ENCODE measurements at regions of chr2 and their contacts with region 1.

Region 1: GRCh38 chr2:68472796-68473414 is 5.5 kb downstream of the APLF start:
- DNase-seq: no peak
- H3K4me3 Mint-ChIP-seq: no peak overlapping the region
- H3K27ac Mint-ChIP-seq: no peak overlapping the region
- H3K4me1 Mint-ChIP-seq: peaks cover 27% of the 10 kb centered on the region
- H3K27me3 Mint-ChIP-seq: peaks cover 1% of the 10 kb centered on the region

Region 2: DNA sequence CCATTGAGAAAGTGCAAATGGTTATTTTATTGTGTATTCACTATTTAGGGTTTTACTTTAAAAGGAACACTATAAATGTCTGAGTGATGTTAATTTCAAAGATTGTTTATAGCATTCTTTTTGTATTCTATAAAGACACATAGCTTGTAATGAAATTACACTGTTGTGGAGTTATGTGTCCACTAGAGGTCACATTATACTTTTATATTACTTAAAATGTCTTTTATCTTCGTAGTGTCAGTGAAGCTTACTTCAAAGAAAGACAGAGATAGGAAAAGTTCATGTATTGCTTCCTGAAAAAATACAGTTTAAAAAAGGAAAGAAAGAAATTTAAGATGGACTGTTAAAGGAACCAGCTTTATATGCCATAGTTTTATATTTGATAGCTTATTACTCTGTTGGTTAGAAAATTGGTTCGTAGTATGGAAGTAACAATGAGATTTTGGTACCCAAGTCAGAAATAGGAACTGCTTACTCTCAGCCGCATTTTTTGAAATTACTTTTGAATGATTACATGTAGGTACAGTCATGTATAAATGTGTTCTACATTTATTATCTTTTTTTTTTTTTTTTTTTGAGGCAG is 15.0 kb after region 1 on chr2:
- intact Hi-C with region 1: loop called (anchors 2 kb)
- DNase-seq: no peak
- H3K4me3 Mint-ChIP-seq: no peak overlapping the region
- H3K27ac Mint-ChIP-seq: no peak overlapping the region
- H3K4me1 Mint-ChIP-seq: peaks cover 6% of the 10 kb centered on the region
- H3K27me3 Mint-ChIP-seq: peaks cover 4% of the 10 kb centered on the region

Region 3: DNA sequence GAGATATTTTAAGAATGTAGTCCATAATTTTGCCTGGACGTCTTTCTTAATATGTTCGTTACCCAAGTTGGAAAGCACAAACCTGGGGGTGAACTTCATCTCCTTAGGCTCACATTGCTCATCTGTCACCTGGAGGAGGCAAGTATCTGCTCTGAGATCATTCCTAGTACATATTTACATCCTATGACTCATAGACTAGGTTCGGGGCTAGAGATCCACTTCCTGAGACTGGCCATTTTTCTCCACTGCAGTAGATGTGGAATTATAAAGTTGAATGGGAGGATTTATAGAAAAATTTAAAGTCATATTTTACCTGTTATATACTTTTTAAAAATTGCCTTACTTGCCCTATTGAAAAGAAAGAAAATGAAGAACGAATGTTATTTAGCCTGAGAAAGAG is 93.0 kb after region 1 on chr2:
- intact Hi-C with region 1: no loop called
- DNase-seq: no peak
- H3K4me3 Mint-ChIP-seq: no peak overlapping the region
- H3K27ac Mint-ChIP-seq: no peak overlapping the region
- H3K4me1 Mint-ChIP-seq: no peaks in the 10 kb centered on the region
- H3K27me3 Mint-ChIP-seq: peaks cover 4% of the 10 kb centered on the region

Region 4: DNA sequence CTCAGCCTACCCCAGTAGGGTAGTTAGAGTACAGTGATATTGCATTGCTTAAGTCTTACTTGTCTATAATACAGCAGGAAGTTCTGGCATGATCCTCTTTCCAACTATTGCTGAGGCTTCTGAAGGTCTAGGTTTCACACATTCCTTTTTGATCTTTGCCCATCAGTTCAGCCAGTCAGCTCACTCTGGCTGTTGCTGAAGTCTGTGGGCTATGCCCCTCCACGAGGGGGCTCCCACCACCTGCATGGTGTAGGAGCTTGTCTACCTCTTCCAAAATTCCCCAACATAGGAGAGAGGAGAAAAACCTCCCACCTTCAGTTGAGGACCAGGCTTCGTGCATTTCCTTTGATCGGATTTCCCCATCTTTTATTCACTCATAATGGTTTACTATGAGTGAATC is 196.7 kb after region 1 on chr2:
- intact Hi-C with region 1: no loop called
- DNase-seq: no peak
- H3K4me3 Mint-ChIP-seq: no peak overlapping the region
- H3K27ac Mint-ChIP-seq: no peak overlapping the region
- H3K4me1 Mint-ChIP-seq: no peaks in the 10 kb centered on the region
- H3K27me3 Mint-ChIP-seq: peaks cover 11% of the 10 kb centered on the region